GM10248 (cell line): ENCODE measurements at regions of chr7 and their contacts with region 1.

Region 1: GRCh38 chr7:134547397-134548054 is 1.4 kb upstream of the AKR1B15 start:
- DNase-seq: peak; percentile 58
- CTCF ChIP-seq: peak; percentile 78

Region 2: DNA sequence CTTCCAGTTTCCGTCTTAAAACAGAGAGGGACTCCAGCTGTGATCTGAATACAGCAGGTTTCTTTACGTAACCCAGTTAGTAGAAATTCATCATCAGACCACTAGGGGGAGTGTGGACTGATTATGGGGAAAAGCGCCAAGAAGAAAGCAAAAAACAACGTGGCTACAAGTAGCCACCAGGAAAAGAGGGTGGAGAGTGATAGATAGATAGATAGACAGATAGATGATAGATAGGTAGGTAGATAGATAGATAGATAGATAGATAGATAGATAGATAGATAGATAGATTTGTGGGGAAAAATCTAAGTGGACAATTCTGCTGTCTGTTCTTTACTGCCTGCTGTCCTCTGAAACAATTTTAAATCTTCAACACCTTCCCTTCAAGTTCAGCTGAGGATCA is 32.9 kb before region 1 on chr7:
- CTCF ChIA-PET with region 1: interaction called, 11 read pairs
- POLR2A ChIA-PET with region 1: no interaction called
- DNase-seq: peak; percentile 64
- CTCF ChIP-seq: peak; percentile 71

Region 3: DNA sequence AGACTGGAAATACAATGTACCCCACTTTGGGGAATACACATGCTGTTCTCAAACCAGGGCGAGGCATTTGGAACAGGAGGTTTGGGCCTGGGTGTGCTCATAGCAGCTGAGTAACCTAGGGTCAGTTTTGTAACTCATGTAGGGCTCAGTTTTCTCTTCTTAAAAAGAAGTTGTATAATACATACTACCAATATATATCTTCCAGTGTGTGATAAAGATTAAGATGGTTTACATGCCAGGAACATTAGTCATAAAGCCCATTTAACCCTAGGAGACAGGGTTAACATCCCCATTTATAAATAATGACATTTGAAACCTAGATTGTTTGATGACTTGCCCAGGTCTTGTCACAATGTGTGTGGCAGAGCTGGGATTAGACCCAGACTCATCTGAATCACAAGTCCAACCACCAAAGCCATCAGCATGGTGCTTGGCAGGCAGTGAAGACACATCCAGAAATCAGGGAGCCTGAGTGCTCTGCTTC is 14.2 kb before region 1 on chr7:
- CTCF ChIA-PET with region 1: interaction called, 25 read pairs
- POLR2A ChIA-PET with region 1: no interaction called
- DNase-seq: no peak
- CTCF ChIP-seq: no peak